A549 (cell line): ENCODE measurements at regions of chr5 and their contacts with region 1.

Region 1: GRCh38 chr5:171387345-171387969 is at the start of gene NPM1:
- DNase-seq: peak; percentile 97 to 99
- ATAC-seq: peak; percentile 77 to 90
- H3K4me3 ChIP-seq: peak within 1 kb of the TSS; percentile 77
- H3K27ac ChIP-seq: peak within 1 kb of the TSS; percentile 95 to 96
- H3K4me1 ChIP-seq: peaks cover 22% of the 10 kb centered on the region
- CTCF ChIP-seq: no peak
- EP300 ChIP-seq: no peak
- POLR2A ChIP-seq: peak; percentile 95
- RAD21 ChIP-seq: no peak
- polyA plus RNA-seq, gene NPM1: 2,566 and 3,380 TPM in 2 replicates

Region 2: GRCh38 chr5:171405601-171406005 is 18.1 kb after region 1 on chr5:
- CTCF ChIA-PET with region 1: interaction called, 4 read pairs
- POLR2A ChIA-PET with region 1: interaction called, 10 read pairs
- DNase-seq: peak in 1 of 2 experiments; percentile 47
- ATAC-seq: peak; percentile 60 to 74
- H3K4me3 ChIP-seq: no peak overlapping the region
- H3K27ac ChIP-seq: no peak overlapping the region
- H3K4me1 ChIP-seq: peaks cover 68% of the 10 kb centered on the region
- CTCF ChIP-seq: peak; percentile 46
- EP300 ChIP-seq: no peak
- POLR2A ChIP-seq: no peak
- RAD21 ChIP-seq: no peak